Heart right ventricle (tissue), 16 donors: ENCODE measurements at regions of chr4 and their contacts with region 1.

Region 1: DNA sequence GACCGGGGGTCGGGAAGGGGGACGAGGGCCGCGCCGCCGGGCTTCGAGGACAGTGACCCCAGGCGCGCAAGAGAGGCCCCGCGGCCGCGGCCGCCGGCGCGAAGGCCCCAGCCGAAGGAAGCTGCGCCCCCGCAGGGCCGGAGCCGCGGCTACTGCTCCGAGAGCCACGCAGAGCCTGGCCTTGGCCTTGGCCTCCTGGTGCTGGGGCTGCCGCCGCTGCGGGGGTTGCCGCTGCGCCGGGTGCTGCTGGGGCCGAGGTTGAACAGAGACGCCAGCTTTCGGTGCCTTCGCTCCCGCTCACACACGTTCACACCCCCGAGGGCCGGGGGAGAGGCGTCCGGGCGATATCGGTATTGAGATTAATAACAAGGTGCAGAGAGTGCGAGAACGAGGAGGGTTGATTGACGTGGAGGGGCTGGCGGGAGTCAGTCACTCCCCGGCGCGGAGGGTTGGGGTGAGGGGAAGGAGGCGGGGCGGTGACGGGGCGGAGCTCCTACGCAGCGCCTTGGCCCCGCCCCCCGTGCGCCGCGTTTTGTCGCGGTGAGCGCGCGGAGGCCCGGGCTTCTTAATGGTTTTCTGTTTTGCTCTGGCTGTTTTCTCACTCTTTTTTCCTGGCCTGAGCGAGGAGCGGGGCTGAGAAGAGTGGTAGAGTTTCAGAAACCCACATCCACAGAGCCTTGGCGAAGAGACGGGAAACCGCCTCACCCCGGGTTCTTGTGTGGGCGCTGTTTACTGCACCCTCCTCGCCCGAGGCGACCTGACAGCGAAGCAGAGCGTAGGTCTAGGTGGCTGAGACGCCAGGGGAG is 878 bp upstream of the CNOT6L start:
- DNase-seq: peak; percentile 93 to 94
- ATAC-seq: peak; percentile 93 to 97 (median 96)
- H3K4me3 ChIP-seq: peak overlapping the region; percentile 81 to 95 (median 94)
- H3K27ac ChIP-seq: peak overlapping the region; percentile 85 to 99 (median 98)
- H3K4me1 ChIP-seq: peaks cover 4 to 49% (median 42%) of the 10 kb centered on the region in 9 donors
- H3K27me3 ChIP-seq: no peaks in the 10 kb centered on the region
- CTCF ChIP-seq: peak in 1 of 9 donors; percentile 15

Region 2: DNA sequence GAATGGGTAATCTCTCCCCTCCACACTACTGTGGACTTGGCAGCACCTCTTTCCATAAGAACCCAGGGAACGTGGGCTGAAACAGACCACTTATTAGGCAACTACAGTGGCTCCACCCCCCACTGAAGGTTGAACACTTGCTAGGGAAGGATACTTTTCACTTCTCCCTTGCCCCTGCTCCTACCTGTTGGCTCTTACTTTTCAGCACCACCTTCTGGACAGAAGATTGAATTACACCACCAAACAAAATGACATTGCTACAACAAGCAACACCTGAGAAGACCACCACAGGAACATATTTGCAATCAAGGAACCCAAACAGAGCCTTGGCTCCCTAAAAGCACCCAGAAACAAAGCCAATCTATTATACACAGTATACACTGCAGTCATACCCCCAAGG is 346.5 kb before region 1 on chr4:
- intact Hi-C with region 1: no loop called
- DNase-seq: no peak
- ATAC-seq: no peak
- H3K4me3 ChIP-seq: no peak overlapping the region
- H3K27ac ChIP-seq: no peak overlapping the region
- H3K4me1 ChIP-seq: no peaks in the 10 kb centered on the region
- H3K27me3 ChIP-seq: no peaks in the 10 kb centered on the region
- CTCF ChIP-seq: peak in 2 of 9 donors; percentile 7 to 17

Region 3: GRCh38 chr4:77734928-77735327 is 85.1 kb before region 1 on chr4:
- intact Hi-C with region 1: loop called in 3 of 10 experiments (anchors 10 kb)
- DNase-seq: no peak
- ATAC-seq: peak in 4 of 8 donors; percentile 46 to 68 (median 58)
- H3K4me3 ChIP-seq: no peak overlapping the region
- H3K27ac ChIP-seq: no peak overlapping the region
- H3K4me1 ChIP-seq: peaks cover 0 to 45% (median 21%) of the 10 kb centered on the region in 9 donors
- H3K27me3 ChIP-seq: no peaks in the 10 kb centered on the region
- CTCF ChIP-seq: no peak

Region 4: GRCh38 chr4:77742054-77742453 is 78.0 kb before region 1 on chr4:
- intact Hi-C with region 1: loop called in 3 of 10 experiments (anchors 10 kb)
- DNase-seq: no peak
- ATAC-seq: no peak
- H3K4me3 ChIP-seq: no peak overlapping the region
- H3K27ac ChIP-seq: no peak overlapping the region
- H3K4me1 ChIP-seq: peaks cover 0 to 10% (median 0%) of the 10 kb centered on the region in 9 donors
- H3K27me3 ChIP-seq: no peaks in the 10 kb centered on the region
- CTCF ChIP-seq: no peak

Region 5: GRCh38 chr4:77758804-77759203 is 61.2 kb before region 1 on chr4:
- intact Hi-C with region 1: loop called in 1 of 10 experiments (anchors 10 kb)
- DNase-seq: no peak
- ATAC-seq: no peak
- H3K4me3 ChIP-seq: no peak overlapping the region
- H3K27ac ChIP-seq: no peak overlapping the region
- H3K4me1 ChIP-seq: no peaks in the 10 kb centered on the region
- H3K27me3 ChIP-seq: no peaks in the 10 kb centered on the region
- CTCF ChIP-seq: no peak

Region 6: DNA sequence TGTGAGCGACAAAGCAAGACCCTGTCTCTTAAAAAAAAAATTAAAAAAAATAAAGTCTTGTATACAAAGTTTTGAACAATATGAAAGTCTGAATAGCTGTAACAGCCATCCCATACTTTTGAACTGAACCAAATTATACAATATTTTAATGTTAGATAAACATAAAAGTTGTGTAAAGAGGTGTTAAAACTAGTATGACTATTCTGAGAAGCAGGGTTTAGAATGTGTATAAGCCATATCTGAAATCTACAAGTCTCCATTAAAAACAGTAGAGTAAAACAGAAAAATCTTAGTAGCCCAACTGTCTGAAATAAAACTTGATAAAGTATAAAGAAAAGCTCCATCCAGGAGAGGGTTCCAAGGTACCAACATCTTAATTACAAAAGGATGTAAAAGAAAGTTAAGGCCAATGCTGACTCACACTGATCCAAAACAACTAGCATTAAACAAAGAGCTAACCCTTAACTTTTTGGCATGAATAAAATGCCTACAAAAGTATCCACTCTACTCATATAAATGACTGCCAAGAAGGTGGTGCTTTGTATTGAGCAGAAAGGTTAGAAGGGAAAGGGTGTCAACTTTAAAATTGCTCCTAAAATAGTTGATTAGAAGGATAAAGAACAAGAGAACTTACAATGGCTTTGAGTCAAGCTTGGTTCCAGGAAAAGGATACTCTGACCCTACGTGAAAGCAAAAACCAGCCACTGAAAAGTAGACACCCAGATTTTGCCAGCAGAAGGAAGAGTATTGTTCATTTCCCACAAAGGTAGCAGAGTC is 19.4 kb before region 1 on chr4:
- intact Hi-C with region 1: no loop called
- DNase-seq: peak in 1 of 2 donors; percentile 11
- ATAC-seq: peak; percentile 70 to 91 (median 86)
- H3K4me3 ChIP-seq: peak overlapping the region in 2 of 10 donors; percentile 14 to 15
- H3K27ac ChIP-seq: peak overlapping the region in 9 of 10 donors; percentile 51 to 71 (median 58)
- H3K4me1 ChIP-seq: peaks cover 0 to 76% (median 39%) of the 10 kb centered on the region in 9 donors
- H3K27me3 ChIP-seq: no peaks in the 10 kb centered on the region
- CTCF ChIP-seq: no peak

Region 7: GRCh38 chr4:77854431-77855111 is 34.5 kb after region 1 on chr4:
- intact Hi-C with region 1: loop called in 2 of 10 experiments (anchors 1 to 5 kb)
- DNase-seq: peak in 1 of 2 donors; percentile 23
- ATAC-seq: peak in 7 of 8 donors; percentile 43 to 93 (median 89)
- H3K4me3 ChIP-seq: peak overlapping the region in 2 of 10 donors; percentile 1 to 6
- H3K27ac ChIP-seq: peak overlapping the region; percentile 66 to 89 (median 78)
- H3K4me1 ChIP-seq: peaks cover 0 to 58% (median 24%) of the 10 kb centered on the region in 9 donors
- H3K27me3 ChIP-seq: no peaks in the 10 kb centered on the region
- CTCF ChIP-seq: no peak

Region 8: DNA sequence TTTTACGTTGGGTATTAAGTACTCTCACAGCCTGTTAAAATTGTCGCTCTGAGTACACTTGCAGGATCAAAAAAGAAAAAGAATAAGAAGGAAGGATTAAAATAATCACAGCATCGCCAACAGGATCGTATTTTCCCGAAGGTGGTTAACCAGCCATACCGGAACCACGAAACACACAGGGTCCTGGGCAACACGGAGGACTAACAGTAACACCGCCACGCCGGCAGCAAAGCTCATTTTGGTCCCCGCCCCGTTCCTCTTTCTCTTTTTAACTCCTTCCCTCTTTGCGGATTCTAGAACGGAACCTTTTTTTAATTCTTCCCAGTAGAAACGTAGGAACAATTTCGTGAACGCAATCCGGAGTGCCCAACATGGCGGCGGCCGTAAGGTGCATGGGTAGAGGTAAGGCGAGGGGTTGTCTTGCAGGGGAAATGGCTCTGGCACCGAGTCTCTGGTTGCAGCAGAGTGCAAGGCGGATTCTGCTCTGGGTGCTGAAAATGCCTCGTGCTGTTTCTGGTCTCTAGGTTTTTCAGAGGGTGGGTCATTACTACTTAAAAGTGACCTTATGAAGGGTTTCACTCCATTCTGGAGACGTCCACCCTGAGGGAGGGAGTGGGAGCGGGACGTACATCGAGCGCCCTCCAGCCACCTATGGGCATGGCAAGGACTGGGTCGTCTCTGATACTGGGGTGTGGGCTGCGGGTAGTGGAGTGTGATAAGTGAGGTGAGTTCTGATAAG is 42.6 kb after region 1 on chr4 and contains the start of gene MRPL1:
- intact Hi-C with region 1: loop called in 8 of 10 experiments (anchors 1 to 10 kb)
- DNase-seq: peak; percentile 83 to 93
- ATAC-seq: peak; percentile 95 to 97 (median 97)
- H3K4me3 ChIP-seq: peak within 1 kb of the TSS; percentile 42 to 85 (median 70)
- H3K27ac ChIP-seq: peak within 1 kb of the TSS; percentile 93 to 99 (median 96)
- H3K4me1 ChIP-seq: peaks cover 0 to 24% (median 14%) of the 10 kb centered on the region in 9 donors
- H3K27me3 ChIP-seq: no peaks in the 10 kb centered on the region
- CTCF ChIP-seq: peak in 1 of 9 donors; percentile 2
- total RNA-seq, gene MRPL1: 29.1 to 57.6 (median 46.7) TPM

Region 9: DNA sequence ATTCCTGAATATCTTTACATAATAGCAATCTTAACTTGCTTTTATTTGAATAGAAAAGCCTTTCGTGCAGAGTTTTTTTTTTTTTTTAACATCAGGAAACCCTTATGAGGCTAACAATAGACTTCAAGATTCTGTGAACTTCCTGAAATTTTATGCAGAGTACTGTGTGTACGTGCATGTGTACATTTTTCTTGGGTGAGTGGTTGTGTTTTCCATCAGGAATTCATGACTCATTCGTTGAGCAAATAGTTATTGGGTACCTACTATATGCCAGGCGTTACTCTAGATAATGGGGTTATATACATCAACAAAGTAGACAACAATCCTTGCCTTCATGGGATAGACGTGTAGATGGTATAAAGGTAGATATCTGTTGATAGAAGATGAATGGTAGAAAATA is 101.7 kb after region 1 on chr4:
- intact Hi-C with region 1: loop called in 1 of 10 experiments (anchors 10 kb)
- DNase-seq: no peak
- ATAC-seq: peak in 7 of 8 donors; percentile 67 to 91 (median 79)
- H3K4me3 ChIP-seq: no peak overlapping the region
- H3K27ac ChIP-seq: peak overlapping the region in 9 of 10 donors; percentile 8 to 81 (median 69)
- H3K4me1 ChIP-seq: peaks cover 0 to 27% (median 9%) of the 10 kb centered on the region in 9 donors
- H3K27me3 ChIP-seq: no peaks in the 10 kb centered on the region
- CTCF ChIP-seq: no peak

Region 10: GRCh38 chr4:78799551-78800495 is 979.8 kb after region 1 on chr4:
- intact Hi-C with region 1: no loop called
- DNase-seq: no peak
- ATAC-seq: no peak
- H3K4me3 ChIP-seq: no peak overlapping the region
- H3K27ac ChIP-seq: no peak overlapping the region
- H3K4me1 ChIP-seq: peaks cover 0 to 15% (median 11%) of the 10 kb centered on the region in 9 donors
- H3K27me3 ChIP-seq: no peaks in the 10 kb centered on the region
- CTCF ChIP-seq: no peak